Esophagus muscularis mucosa (tissue), 4 donors: ENCODE measurements at regions of chr1 and their contacts with region 1.

Region 1: DNA sequence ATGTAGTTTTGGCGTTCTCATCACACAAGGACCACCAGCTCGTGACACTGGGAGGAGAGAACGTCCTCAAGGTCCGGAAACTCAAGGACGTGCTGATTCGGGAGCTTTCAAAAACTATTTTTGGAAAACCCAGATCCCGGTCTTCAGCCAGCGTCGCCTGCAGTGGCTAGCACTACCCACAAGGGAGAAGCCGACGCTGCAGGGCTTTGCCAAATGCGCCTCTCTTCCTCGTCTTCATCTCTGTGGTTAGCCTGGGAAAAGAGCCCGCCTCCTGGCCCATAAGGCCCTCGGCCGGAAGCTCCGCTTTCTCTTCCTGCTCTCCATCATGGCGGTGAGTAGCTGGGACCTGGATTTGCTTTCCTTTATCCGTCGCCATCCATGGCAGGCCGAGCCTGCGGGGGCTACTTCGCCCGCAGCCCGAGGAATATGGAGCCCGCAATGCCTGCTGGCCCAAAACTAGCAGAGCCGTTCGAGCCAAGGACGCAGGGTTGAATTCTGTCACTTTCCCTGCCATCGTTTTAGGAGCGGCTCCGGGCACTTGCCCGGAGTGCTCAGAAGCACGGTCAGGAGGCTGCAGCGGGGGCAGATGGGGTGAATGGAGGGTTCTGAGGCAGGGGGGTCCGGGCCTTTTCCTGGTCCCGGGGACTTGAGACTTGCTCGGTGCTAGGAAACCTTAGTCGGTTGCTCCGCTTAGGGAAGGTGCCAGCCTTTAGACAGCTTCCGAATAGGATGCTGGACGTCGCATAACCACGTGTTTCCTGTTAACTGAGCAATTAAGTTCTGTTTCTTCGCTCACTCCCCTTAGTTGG is at the start of gene RPL11:
- DNase-seq: peak; percentile 97
- H3K4me3 ChIP-seq: peak within 1 kb of the TSS; percentile 73 to 94 (median 80)
- H3K27ac ChIP-seq: peak within 1 kb of the TSS; percentile 84 to 89 (median 87)
- H3K4me1 ChIP-seq: peaks cover 38 to 49% (median 44%) of the 10 kb centered on the region in 4 donors
- H3K27me3 ChIP-seq: no peaks in the 10 kb centered on the region
- CTCF ChIP-seq: peak; percentile 81 to 91 (median 90)
- EP300 ChIP-seq: no peak
- POLR2A ChIP-seq: peak; percentile 94
- total RNA-seq, gene RPL11: 706 to 1,125 (median 899) TPM

Region 2: DNA sequence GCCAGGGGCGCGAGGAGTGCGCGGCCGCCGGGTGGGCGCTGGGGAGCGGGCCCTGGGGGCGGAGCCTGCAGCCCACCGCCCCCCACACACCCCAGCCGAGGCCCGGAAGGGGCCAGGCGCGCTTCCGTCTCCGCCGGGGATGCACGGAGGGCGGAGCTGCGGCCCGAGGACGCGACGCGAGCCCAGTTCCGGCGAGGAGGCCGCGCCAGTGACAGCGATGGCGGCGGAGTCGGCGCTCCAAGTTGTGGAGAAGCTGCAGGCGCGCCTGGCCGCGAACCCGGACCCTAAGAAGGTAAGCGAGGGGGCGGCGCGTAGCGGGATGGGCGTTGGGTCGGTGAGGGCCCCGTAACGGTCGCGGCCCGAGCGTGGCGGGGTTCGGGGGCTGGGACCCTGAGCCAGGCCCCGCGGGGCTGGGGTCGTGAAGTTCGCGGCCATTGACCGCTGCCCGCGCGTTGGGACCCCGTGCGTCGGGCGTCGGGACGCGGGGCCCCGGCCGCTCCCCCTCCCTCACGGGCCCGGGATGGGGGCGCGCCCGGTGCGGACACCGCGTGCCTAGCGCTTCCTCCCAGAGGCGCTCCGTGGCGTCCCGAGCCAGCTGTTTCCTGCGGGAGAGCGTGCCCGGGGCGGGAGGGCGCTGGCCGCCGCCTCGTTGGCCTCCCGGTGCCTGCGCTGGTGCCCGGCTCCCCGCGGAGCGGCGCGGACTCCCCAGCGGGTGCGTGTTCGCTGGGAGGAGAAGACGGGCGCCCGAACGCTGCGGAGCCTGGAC is 51.8 kb after region 1 on chr1 and contains the start of gene ELOA:
- intact Hi-C with region 1: loop called (anchors 5 kb)
- DNase-seq: no peak
- H3K4me3 ChIP-seq: peak within 1 kb of the TSS; percentile 83 to 96 (median 96)
- H3K27ac ChIP-seq: peak within 1 kb of the TSS; percentile 92 to 95 (median 95)
- H3K4me1 ChIP-seq: peaks cover 23 to 51% (median 46%) of the 10 kb centered on the region in 4 donors
- H3K27me3 ChIP-seq: no peaks in the 10 kb centered on the region
- CTCF ChIP-seq: no peak
- EP300 ChIP-seq: no peak
- POLR2A ChIP-seq: peak; percentile 43
- total RNA-seq, gene ELOA: 35.7 to 45.4 (median 39.1) TPM